Activated CD4-positive, alpha-beta T cell treated with anti-CD3 and anti-CD28 coated beads for 36 hours (primary cell): ENCODE measurements at regions of chr2 and their contacts with region 1.

Region 1: GRCh38 chr2:97663965-97664635 is at the start of gene ACTR1B:
- DNase-seq: peak; percentile 99
- ATAC-seq: peak; percentile 77
- H3K4me3 Mint-ChIP-seq: peak within 1 kb of the TSS; percentile 88
- H3K27ac Mint-ChIP-seq: peak within 1 kb of the TSS; percentile 95
- H3K4me1 Mint-ChIP-seq: peaks cover 36% of the 10 kb centered on the region
- H3K27me3 Mint-ChIP-seq: no peaks in the 10 kb centered on the region
- total RNA-seq, gene ACTR1B: 92.0 to 124 TPM

Region 2: DNA sequence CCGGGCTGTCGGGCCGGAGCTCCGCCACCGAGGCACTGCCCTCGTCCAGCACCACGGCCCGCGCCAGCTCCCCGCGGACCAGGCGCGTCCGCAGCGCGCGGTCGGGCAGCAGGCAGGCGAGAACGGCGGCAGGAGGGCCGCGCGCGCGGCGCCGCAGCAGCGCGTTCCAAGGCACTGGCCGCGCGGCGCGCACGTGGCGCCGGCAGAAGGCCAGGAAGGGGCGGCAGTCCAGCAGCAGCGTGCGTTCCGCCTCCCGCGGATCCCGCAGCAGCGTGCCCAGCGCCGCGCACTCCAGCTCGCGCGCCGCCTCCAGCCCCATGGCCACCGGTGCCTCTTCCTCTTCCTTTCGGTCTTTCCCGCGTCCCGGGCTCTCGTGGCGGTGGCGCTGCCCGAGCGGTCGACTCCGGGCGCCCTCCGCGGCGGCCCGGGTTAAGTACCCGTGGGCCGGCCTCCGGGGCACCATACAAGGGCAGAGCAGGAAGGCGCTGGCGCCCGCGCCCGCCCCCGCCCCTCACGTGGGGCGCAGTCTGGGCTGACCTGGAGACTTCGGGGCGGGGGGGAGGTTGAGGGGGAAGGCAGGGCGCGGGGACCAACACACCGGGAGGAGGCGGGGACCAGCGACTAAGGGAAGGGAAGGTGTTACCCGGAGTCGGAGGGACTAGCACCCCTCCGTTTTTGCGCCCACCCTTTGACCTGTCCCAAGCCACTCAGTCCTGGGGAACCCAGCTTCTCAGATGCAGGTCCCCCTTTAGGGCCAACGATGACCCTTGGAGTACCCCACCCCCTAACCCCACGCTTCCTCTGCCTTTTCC is 1518.9 kb before region 1 on chr2 and contains the start of gene DUSP2:
- CTCF ChIA-PET with region 1: no interaction called
- POLR2A ChIA-PET with region 1: no interaction called
- intact Hi-C with region 1: loop called in 1 of 2 experiments (anchors 5 kb)
- DNase-seq: peak; percentile 97
- ATAC-seq: peak; percentile 45
- H3K4me3 Mint-ChIP-seq: peak within 1 kb of the TSS; percentile 97
- H3K27ac Mint-ChIP-seq: peak within 1 kb of the TSS; percentile 99
- H3K4me1 Mint-ChIP-seq: peaks cover 57% of the 10 kb centered on the region
- H3K27me3 Mint-ChIP-seq: no peaks in the 10 kb centered on the region
- total RNA-seq, gene DUSP2: 248 to 407 TPM

Region 3: GRCh38 chr2:96638144-96639121 is 1025.7 kb before region 1 on chr2 and contains the start of gene KANSL3:
- CTCF ChIA-PET with region 1: no interaction called
- POLR2A ChIA-PET with region 1: no interaction called
- intact Hi-C with region 1: loop called in 1 of 2 experiments (anchors 5 kb)
- DNase-seq: peak; percentile 94
- ATAC-seq: peak; percentile 86
- H3K4me3 Mint-ChIP-seq: peak within 1 kb of the TSS; percentile 91
- H3K27ac Mint-ChIP-seq: peak within 1 kb of the TSS; percentile 93
- H3K4me1 Mint-ChIP-seq: peaks cover 30% of the 10 kb centered on the region
- H3K27me3 Mint-ChIP-seq: no peaks in the 10 kb centered on the region
- total RNA-seq, gene KANSL3: 33.9 to 39.1 TPM

Region 4: GRCh38 chr2:96868555-96869280 is 795.4 kb before region 1 on chr2:
- CTCF ChIA-PET with region 1: no interaction called
- POLR2A ChIA-PET with region 1: no interaction called
- intact Hi-C with region 1: loop called in 1 of 2 experiments (anchors 5 kb)
- DNase-seq: peak; percentile 77
- ATAC-seq: peak; percentile 52
- H3K4me3 Mint-ChIP-seq: peak overlapping the region; percentile 78
- H3K27ac Mint-ChIP-seq: peak overlapping the region; percentile 83
- H3K4me1 Mint-ChIP-seq: peaks cover 41% of the 10 kb centered on the region
- H3K27me3 Mint-ChIP-seq: peaks cover 6% of the 10 kb centered on the region

Region 5: DNA sequence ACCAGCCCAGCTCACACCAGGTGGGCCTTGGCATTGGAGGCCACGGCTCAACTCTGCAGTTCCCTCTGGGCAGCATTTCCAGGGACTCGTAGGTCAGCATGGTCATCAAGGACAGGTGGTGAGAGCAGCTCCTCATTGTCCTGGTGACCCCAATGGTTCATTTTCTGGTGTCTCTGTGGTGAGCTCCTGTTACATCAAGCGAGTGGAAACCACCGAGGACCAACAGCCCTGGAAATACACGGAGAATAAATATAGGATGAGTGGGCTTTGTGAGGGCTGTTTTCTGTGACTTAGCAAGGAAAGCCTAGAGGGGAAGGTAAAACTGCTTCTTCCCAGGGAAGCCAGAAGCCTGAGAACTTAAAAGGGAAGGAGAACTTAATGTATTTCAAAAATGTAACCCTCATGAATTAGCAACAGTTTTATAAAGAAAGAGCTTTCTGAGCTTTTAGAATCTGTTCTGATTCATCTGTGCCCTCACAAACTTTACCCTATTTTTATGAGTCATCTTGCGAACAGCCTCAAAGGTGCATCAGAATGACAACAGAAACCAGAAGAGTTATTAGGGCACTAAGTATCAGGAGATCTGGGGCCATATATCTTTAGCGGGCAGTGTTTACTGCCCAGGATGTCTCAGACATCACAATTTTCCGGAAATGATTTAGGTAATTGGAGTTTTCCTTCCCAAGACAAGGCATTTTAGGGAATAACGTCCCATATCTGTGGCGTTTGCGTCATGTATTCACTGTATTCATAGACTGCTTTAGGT is 24.1 kb after region 1 on chr2:
- CTCF ChIA-PET with region 1: interaction called, 6 read pairs
- POLR2A ChIA-PET with region 1: no interaction called
- intact Hi-C with region 1: loop called in 1 of 2 experiments (anchors 1 kb)
- DNase-seq: no peak
- ATAC-seq: peak; percentile 96
- H3K4me3 Mint-ChIP-seq: no peak overlapping the region
- H3K27ac Mint-ChIP-seq: peak overlapping the region; percentile 73
- H3K4me1 Mint-ChIP-seq: peaks cover 10% of the 10 kb centered on the region
- H3K27me3 Mint-ChIP-seq: no peaks in the 10 kb centered on the region

Region 6: GRCh38 chr2:97718051-97718882 is 54.2 kb after region 1 on chr2:
- CTCF ChIA-PET with region 1: interaction called, 11 read pairs
- POLR2A ChIA-PET with region 1: interaction called, 8 read pairs
- intact Hi-C with region 1: loop called (anchors 1 to 5 kb)
- DNase-seq: peak; percentile 86
- ATAC-seq: peak; percentile 77
- H3K4me3 Mint-ChIP-seq: peak overlapping the region; percentile 71
- H3K27ac Mint-ChIP-seq: peak overlapping the region; percentile 95
- H3K4me1 Mint-ChIP-seq: peaks cover 68% of the 10 kb centered on the region
- H3K27me3 Mint-ChIP-seq: no peaks in the 10 kb centered on the region

Region 7: DNA sequence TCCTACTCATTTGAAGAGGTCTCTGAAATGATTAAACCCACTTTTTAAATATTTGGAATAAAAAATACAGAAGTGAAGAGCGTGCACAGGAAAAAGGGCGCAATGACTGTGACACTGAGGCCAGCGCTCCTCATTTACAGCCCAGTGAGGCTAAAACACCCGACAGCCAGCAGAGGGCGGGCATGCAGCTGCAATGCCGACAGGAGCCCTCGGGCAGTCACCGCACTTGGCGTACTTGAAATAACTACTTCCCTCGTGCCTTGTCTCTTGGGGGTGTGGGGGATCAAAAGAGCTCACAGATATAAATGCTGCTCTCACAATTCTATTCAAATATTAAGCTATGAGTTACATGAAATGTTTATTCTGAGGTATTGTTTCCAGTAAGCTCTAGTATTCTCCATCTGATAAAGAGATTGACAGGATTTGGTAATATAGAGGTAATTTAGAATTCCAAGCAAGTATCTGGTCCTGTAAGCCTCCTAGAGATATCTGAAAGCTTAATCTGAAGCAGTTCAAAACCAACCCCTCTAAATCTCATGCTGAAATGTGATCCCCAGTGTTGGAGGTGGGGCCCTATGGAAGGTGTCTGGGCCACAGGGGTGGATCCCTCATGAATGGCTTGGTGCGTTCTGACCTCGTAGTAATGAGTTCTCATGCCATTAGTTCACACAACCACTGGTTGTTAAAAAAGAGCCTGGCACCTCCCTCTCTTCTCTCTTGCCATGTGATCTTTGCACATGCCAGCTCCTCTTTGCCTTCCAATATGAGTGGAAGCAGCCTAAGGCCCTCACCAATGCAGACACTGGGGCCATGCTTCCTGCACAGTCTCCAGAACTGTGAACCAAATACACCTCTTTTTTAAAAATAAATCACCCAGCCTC is 142.9 kb after region 1 on chr2:
- CTCF ChIA-PET with region 1: no interaction called
- POLR2A ChIA-PET with region 1: no interaction called
- intact Hi-C with region 1: no loop called
- DNase-seq: peak; percentile 91
- ATAC-seq: peak; percentile 98
- H3K4me3 Mint-ChIP-seq: no peak overlapping the region
- H3K27ac Mint-ChIP-seq: no peak overlapping the region
- H3K4me1 Mint-ChIP-seq: peaks cover 2% of the 10 kb centered on the region
- H3K27me3 Mint-ChIP-seq: no peaks in the 10 kb centered on the region

Region 8: GRCh38 chr2:97844311-97844859 is 180.3 kb after region 1 on chr2:
- CTCF ChIA-PET with region 1: no interaction called
- POLR2A ChIA-PET with region 1: no interaction called
- intact Hi-C with region 1: no loop called
- DNase-seq: no peak
- ATAC-seq: no peak
- H3K4me3 Mint-ChIP-seq: no peak overlapping the region
- H3K27ac Mint-ChIP-seq: no peak overlapping the region
- H3K4me1 Mint-ChIP-seq: peaks cover 11% of the 10 kb centered on the region
- H3K27me3 Mint-ChIP-seq: no peaks in the 10 kb centered on the region

Region 9: GRCh38 chr2:98465456-98466226 is 801.5 kb after region 1 on chr2:
- CTCF ChIA-PET with region 1: no interaction called
- POLR2A ChIA-PET with region 1: no interaction called
- intact Hi-C with region 1: loop called in 1 of 2 experiments (anchors 5 kb)
- DNase-seq: peak; percentile 78
- ATAC-seq: peak; percentile 16
- H3K4me3 Mint-ChIP-seq: peak overlapping the region; percentile 69
- H3K27ac Mint-ChIP-seq: peak overlapping the region; percentile 96
- H3K4me1 Mint-ChIP-seq: peaks cover 90% of the 10 kb centered on the region
- H3K27me3 Mint-ChIP-seq: no peaks in the 10 kb centered on the region